ENCODE measurements at regions of chr17 and their contacts with region 1.

Region 1: GRCh38 chr17:4436846-4437245 is 3.1 kb downstream of the SPNS3 start:
- DNase-seq: peak; percentile 76
- H3K4me3 ChIP-seq: peak overlapping the region; percentile 48
- H3K27ac ChIP-seq: peak overlapping the region; percentile 72
- H3K4me1 ChIP-seq: peaks cover 56% of the 10 kb centered on the region
- CTCF ChIP-seq: no peak

Region 2: GRCh38 chr17:4453812-4454591 is 17.2 kb after region 1 on chr17:
- CTCF ChIA-PET with region 1: no interaction called
- POLR2A ChIA-PET with region 1: interaction called, 15 read pairs
- intact Hi-C with region 1: no loop called
- DNase-seq: no peak
- H3K4me3 ChIP-seq: no peak overlapping the region
- H3K27ac ChIP-seq: no peak overlapping the region
- H3K4me1 ChIP-seq: no peaks in the 10 kb centered on the region
- CTCF ChIP-seq: no peak

Region 3: DNA sequence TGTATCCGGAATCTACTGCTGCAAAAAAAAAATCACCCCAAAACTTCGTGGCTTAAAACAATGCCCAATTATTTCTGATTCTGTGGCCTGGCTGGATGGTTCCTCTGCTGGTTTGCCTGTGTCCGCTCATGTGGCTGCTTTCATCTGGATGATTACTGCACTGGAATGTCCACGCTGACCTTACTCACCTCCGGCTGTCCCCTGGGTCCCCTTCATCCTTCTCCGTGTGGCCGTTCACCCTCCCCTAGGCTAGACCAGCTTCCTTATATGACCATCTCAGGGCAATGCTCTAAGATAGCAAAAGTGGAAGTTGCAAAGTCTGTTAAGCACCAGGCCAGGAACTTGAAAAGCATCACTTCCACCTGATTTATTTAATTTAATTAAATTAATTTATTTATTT is 30.4 kb after region 1 on chr17:
- CTCF ChIA-PET with region 1: no interaction called
- POLR2A ChIA-PET with region 1: no interaction called
- intact Hi-C with region 1: no loop called
- DNase-seq: no peak
- H3K4me3 ChIP-seq: no peak overlapping the region
- H3K27ac ChIP-seq: no peak overlapping the region
- H3K4me1 ChIP-seq: no peaks in the 10 kb centered on the region
- CTCF ChIP-seq: no peak

Measured in OCI-LY7 (cell line).